Activated B cell treated with CpG ODN at 0.5 μM for 24 hours (primary cell): ENCODE measurements at regions of chr4 and their contacts with region 1.

Region 1: DNA sequence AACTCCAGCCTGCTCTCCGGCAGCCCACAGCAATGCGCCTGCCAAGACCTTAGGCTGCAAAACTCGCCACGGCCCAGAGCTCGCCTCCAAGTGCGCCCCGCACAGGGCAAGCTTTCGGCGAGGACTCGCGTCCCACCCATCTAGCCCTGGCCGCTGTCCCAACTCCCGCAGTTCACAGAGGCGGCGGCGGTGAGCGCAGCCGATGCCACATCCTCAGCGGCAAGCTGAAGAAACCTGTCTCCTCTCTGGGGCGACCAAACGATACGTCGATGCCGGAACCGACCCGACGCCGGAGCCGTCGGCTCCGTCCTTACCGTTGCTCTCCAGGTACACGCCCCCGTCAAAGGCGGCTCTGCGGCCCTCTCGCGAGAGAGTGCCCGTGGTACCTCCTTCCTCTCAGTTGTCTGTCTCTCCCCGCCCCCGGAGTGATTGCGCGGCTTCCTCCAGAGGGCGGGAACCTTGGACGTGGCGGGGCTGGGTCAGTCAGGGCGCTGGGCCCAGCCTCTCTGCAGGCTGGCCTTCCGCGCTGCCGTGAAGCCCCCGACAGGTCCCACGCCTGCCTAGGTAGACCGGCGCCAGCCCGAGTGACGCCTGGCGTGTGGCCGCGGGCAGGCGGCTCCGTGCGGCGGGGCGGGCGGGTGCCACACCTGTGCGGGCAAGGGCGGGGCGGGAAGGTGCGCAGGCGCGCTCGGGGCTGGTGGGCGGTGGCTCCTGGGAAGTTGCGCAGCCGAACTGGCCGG is 380 bp upstream of the RAB33B start:
- DNase-seq: peak; percentile 97
- ATAC-seq: peak; percentile 88
- H3K4me3 Mint-ChIP-seq: peak overlapping the region; percentile 95
- H3K27ac Mint-ChIP-seq: peak overlapping the region; percentile 98
- H3K4me1 Mint-ChIP-seq: peaks cover 55% of the 10 kb centered on the region
- H3K27me3 Mint-ChIP-seq: no peaks in the 10 kb centered on the region
- CTCF ChIP-seq: no peak

Region 2: DNA sequence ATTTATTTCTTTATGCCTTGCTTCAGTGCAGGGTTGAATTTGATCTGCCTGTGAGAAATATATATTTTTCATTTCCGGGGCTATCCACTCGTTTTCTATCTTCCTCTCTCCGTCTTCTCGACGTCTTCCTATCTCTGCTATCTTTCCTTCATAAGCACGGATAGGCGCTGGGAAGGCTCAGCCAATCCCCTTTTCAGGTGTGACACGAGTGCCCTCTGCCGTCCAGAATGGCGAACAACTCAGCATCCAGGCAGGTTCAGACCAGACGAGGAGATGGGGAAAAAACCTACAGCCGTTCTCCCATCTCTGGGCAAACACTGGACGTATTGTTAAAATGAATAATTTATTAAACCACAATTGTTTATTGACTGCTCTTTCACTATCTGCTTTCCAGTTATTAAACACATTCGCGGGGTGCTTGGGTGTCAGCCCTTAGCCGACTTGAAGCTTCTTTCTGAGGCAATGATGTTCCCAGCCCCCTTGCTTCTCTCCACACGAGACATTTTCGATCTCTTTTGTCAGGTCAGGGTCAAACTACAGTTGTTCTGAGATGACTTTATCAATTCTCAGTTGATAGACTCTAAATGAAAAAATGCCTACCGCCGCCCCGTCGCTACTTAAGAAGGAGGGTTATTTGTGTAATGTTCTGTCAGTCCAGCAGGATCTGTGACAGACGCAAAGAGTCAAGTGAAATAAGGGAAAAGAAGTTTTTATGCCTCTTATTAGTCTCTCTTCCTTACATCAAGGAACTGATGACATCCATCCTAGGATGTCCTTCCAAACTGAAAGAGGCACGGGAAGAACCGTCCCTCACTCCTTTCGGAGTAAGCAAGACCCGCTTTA is 534.2 kb before region 1 on chr4:
- CTCF ChIA-PET with region 1: no interaction called
- POLR2A ChIA-PET with region 1: no interaction called
- intact Hi-C with region 1: no loop called
- DNase-seq: no peak
- ATAC-seq: peak; percentile 60
- H3K4me3 Mint-ChIP-seq: no peak overlapping the region
- H3K27ac Mint-ChIP-seq: no peak overlapping the region
- H3K4me1 Mint-ChIP-seq: peaks cover 8% of the 10 kb centered on the region
- H3K27me3 Mint-ChIP-seq: peaks cover 13% of the 10 kb centered on the region
- CTCF ChIP-seq: peak; percentile 49

Region 3: DNA sequence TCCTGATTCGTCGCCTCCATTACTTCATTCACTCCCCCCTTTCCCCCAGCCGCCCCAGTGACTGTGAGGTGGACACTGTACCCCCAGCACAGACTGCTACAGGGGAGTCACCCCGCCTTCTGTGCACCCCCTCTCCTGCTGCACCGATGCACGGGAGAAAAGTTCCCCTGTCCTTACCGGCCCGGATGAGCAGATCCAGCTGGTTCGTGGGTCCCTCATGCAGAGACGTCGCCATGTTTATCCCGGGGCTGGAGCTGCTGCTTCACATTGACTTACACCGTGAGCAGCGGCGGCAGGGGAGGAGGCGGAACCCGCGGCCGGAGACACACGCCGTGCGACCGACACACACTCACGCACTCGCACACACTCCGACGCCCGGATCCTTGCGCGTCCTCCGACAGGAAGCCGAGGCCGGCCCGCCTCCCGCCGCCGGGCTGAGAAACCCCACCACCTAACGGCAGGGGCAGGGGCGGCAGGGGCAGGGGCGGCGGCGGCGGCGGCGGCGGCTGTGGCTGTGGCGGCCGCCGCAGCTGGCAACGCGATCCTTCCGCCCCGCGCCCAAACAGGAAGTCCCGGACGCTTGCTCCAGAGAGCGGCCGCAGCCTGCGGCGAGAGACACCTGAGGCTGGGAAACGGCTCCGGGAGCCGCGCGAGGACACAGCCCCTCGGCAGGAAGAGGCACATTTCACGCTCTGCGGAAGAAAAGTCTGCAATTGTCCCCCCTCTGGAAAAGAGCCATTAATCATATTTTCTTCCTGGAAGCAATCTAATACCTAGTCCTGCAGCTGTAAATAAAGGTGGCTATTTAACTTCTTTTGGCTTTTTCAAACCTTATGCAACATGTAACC is 369.4 kb before region 1 on chr4:
- CTCF ChIA-PET with region 1: no interaction called
- POLR2A ChIA-PET with region 1: interaction called, 9 read pairs
- intact Hi-C with region 1: loop called (anchors 1 kb)
- DNase-seq: peak; percentile 79
- ATAC-seq: peak; percentile 66
- H3K4me3 Mint-ChIP-seq: peak overlapping the region; percentile 99
- H3K27ac Mint-ChIP-seq: peak overlapping the region; percentile 99
- H3K4me1 Mint-ChIP-seq: peaks cover 38% of the 10 kb centered on the region
- H3K27me3 Mint-ChIP-seq: no peaks in the 10 kb centered on the region
- CTCF ChIP-seq: no peak

Region 4: DNA sequence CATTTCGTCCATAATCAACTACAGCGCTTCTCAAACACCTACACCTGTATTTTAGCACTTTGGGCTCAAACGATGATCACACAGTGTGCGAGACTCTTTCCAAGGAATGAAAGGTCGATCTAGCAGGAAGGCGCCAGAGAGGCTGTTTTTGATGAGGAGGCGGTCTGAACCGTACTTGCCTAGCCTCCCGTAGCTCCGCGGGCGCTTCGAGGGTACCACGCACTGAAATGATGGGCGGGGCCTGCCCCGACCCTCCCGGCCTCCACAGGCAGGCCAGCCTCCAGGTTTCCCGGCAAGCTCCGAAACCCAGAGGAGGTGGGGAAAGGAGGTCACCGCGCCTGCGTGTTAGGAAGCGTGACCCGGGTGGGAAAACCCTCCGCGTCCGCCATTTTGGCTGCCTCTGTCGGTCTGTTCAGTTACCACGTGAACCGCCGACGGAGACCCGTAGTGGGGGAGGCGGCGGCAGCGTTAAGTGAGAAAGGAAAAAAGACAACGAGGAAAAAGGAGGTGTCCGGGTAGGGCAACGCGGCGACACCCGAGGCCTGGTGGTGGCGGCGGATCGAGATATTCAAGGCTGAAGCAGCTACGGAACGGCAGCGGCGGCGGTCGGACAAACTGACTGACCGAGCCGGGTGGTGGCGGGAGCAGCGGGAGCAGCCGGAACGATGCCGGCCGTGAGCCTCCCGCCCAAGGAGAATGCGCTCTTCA is 152.3 kb before region 1 on chr4 and contains the start of gene NAA15:
- CTCF ChIA-PET with region 1: no interaction called
- POLR2A ChIA-PET with region 1: interaction called, 9 read pairs
- intact Hi-C with region 1: loop called (anchors 1 kb)
- DNase-seq: peak; percentile 93
- ATAC-seq: peak; percentile 91
- H3K4me3 Mint-ChIP-seq: peak within 1 kb of the TSS; percentile 99
- H3K27ac Mint-ChIP-seq: peak within 1 kb of the TSS; percentile 98
- H3K4me1 Mint-ChIP-seq: peaks cover 49% of the 10 kb centered on the region
- H3K27me3 Mint-ChIP-seq: no peaks in the 10 kb centered on the region
- CTCF ChIP-seq: no peak
- total RNA-seq, gene NAA15: 62.6 and 66.5 TPM in 2 replicates

Region 5: DNA sequence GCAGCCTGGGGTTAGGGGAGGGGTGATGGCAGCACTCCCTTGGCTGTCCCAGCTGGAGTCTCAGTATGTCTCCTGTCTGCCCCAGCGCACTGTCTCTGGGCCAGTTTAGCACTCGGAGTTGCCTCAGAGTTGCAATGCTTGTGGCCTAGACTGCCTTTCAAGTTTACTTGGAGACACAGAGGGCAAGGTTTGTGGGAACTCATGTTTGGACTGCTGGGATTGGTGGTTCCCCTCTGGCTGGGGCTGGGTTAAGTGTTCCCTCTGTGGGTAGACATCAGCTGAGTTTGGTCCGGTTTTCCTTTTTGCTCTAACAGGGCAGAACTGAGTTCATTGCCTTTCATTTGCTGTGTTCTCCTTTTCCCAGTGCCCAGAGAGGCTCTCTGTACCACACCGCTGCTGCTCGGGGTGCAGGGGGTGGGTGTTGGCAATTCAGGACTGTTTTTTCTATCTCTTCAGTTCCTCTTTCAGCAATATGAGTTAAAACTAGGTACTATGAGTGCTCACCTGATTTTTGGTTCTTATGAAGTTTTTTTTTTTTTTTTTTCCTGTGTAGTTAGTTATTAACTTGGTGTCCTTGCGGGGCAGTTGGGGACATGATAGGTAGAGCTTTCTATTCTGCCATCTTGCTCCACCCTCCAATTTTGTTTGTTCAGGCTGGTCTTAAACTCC is 17.6 kb after region 1 on chr4:
- CTCF ChIA-PET with region 1: no interaction called
- POLR2A ChIA-PET with region 1: interaction called, 7 read pairs
- intact Hi-C with region 1: loop called (anchors 2 kb)
- DNase-seq: no peak
- ATAC-seq: peak; percentile 56
- H3K4me3 Mint-ChIP-seq: no peak overlapping the region
- H3K27ac Mint-ChIP-seq: peak overlapping the region; percentile 41
- H3K4me1 Mint-ChIP-seq: peaks cover 30% of the 10 kb centered on the region
- H3K27me3 Mint-ChIP-seq: no peaks in the 10 kb centered on the region
- CTCF ChIP-seq: no peak

Region 6: DNA sequence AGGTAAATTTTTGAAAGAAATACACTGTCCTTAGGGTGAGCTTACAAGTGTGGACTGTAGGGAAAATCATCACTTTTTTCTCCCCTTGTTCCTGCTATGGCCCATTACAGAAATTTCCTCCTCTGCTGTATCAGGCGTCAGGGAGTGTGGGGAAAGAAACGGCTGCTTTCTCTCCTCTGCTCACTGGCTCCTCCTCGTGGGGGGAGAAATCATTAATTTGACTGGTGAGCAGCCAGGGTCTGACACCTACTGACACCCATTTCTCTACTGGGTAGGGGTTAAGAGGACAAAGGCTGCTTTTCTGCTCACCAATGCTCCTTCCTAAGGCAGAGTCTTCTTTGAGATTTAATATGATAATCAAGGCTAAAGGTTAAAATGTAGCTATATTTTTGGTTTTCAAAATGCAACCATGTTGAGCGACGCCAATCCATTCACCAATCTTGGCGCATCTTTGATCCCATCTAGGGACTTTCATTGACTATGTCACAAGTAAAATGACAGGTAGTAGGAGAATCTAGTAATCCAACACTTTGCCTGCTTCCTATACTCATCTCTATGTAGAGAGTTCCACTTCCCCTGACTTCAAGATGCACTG is 77.4 kb after region 1 on chr4:
- CTCF ChIA-PET with region 1: interaction called, 4 read pairs
- POLR2A ChIA-PET with region 1: no interaction called
- intact Hi-C with region 1: loop called (anchors 2 kb)
- DNase-seq: peak; percentile 19
- ATAC-seq: peak; percentile 60
- H3K4me3 Mint-ChIP-seq: no peak overlapping the region
- H3K27ac Mint-ChIP-seq: no peak overlapping the region
- H3K4me1 Mint-ChIP-seq: peaks cover 4% of the 10 kb centered on the region
- H3K27me3 Mint-ChIP-seq: no peaks in the 10 kb centered on the region
- CTCF ChIP-seq: no peak

Region 7: DNA sequence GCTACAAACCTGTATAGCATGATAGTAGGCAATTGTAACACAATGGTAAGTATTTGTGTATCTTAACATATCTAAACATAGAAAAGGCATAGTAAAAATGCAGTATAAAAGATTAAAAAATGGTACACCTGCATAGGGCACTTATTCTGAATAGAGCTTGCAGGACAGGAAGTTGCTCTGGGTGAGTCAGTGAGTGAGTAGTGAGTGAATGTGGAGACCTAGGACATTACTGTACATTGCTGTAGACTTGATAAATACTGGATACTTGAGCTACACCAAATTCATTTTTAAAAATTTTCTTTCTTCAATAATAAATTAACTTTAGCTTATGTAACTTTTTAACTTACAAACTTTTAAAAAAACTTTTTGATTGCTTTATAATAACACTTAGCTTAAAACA is 768.6 kb after region 1 on chr4:
- CTCF ChIA-PET with region 1: no interaction called
- POLR2A ChIA-PET with region 1: no interaction called
- intact Hi-C with region 1: no loop called
- DNase-seq: no peak
- ATAC-seq: no peak
- H3K4me3 Mint-ChIP-seq: no peak overlapping the region
- H3K27ac Mint-ChIP-seq: no peak overlapping the region
- H3K4me1 Mint-ChIP-seq: no peaks in the 10 kb centered on the region
- H3K27me3 Mint-ChIP-seq: peaks cover 3% of the 10 kb centered on the region
- CTCF ChIP-seq: no peak

Region 8: DNA sequence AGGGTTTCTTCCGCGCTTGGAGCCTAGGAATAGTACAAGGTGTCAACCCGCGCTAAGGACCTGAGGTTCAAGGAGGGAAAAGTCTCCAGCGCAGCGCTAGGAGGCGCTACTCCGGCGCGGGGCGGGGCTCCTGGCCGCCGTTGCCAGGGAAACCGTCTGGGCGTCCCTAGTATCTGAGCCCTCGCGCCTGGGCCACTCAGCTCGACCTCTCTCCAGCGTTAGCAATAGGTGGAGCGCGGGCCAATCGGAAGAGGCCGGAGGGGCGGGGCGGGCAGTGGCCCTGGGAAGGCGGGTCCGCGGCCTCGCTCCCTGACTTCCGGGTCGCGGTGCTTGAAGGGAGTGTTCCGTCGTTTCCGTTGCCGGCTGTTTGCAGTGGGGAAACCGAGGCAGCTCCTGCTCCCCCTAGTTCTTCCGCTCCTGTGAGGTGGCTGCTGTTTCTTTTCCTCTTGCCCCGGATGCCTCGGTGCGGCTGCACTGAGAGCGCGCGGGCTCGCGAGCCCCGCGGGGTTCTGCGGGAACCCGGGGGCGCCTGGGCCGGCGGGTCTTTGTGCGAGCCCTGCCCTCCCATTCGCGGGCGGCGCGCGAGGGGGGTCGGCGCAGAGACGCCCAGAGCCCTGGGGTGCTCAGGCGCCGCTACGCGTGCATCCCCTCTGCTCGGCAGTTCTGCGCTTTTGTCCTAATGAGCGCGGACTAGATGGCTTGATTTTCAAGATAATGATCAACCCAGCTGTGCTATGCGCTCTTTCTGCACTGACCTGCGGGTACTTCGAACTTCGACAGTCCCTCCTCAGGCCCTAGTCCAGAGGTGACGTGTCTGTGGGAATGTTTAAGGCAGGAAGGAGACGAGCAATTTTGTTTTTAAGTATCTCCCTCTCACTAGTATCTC is 1070.6 kb after region 1 on chr4 and contains the start of gene ELMOD2:
- CTCF ChIA-PET with region 1: no interaction called
- POLR2A ChIA-PET with region 1: interaction called, 3 read pairs
- intact Hi-C with region 1: loop called (anchors 2 kb)
- DNase-seq: peak; percentile 94
- ATAC-seq: peak; percentile 99
- H3K4me3 Mint-ChIP-seq: peak within 1 kb of the TSS; percentile 90
- H3K27ac Mint-ChIP-seq: peak within 1 kb of the TSS; percentile 84
- H3K4me1 Mint-ChIP-seq: peaks cover 14% of the 10 kb centered on the region
- H3K27me3 Mint-ChIP-seq: no peaks in the 10 kb centered on the region
- CTCF ChIP-seq: peak; percentile 72
- total RNA-seq, gene ELMOD2: 20.4 and 20.8 TPM in 2 replicates

Region 9: GRCh38 chr4:141220655-141221605 is 1767.4 kb after region 1 on chr4 and contains the start of gene ZNF330:
- CTCF ChIA-PET with region 1: no interaction called
- POLR2A ChIA-PET with region 1: no interaction called
- intact Hi-C with region 1: loop called (anchors 2 kb)
- DNase-seq: peak; percentile 95
- ATAC-seq: peak; percentile 90
- H3K4me3 Mint-ChIP-seq: peak within 1 kb of the TSS; percentile 94
- H3K27ac Mint-ChIP-seq: peak within 1 kb of the TSS; percentile 89
- H3K4me1 Mint-ChIP-seq: peaks cover 28% of the 10 kb centered on the region
- H3K27me3 Mint-ChIP-seq: no peaks in the 10 kb centered on the region
- CTCF ChIP-seq: no peak
- total RNA-seq, gene ZNF330: 40.7 and 41.2 TPM in 2 replicates